ENCODE measurements at regions of chr16 and their contacts with region 1.

Region 1: DNA sequence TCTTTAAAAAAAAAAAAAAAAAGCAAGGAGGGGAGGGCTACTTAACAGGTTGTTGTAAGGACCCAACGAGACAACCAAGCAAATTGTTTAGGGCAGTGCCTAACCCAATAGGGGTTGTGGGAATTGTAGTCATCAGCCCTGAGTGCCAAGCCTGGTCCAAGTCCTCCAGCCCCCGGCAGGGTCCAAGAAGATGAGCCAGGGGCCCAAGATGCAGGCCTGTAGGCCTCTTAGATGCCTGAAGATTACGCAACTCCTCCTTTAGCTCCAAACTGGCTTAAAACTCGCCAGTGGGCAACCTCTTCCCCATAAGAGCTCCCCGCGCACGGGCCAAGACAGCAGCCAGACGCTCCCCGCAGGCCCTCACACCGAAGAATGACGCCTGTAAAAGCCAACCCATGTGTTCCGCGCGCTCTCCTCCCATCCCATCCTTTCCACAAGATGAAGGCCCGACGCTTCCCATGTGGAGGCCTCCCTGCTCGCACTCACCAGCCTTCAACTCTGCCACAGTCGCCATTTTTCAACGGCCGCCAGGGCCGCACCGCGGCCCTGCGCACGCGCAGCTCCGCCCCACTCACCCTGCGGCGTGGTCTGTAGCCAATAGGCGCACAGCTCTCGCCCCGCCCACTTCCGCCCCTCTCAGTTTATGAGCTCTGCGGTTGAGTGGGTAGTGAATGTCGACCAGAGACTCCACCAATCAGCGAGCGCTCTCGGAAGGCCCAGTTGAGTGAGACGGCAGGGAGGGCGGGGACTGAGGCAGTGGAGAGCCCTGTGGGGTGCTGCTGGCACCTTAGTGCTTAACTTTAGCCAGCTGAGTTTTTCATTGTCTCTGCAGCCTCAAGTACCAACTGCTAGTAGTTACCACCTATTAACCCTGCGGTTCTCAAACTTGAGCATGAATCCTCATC is at the start of gene CEP20:
- DNase-seq: peak; percentile 98
- H3K4me3 ChIP-seq: peak within 1 kb of the TSS; percentile 72 to 99 (median 97)
- H3K27ac ChIP-seq: peak within 1 kb of the TSS; percentile 85
- H3K4me1 ChIP-seq: peaks cover 15% of the 10 kb centered on the region
- H3K27me3 ChIP-seq: no peaks in the 10 kb centered on the region
- CTCF ChIP-seq: peak in 1 of 2 donors; percentile 22
- total RNA-seq, gene CEP20: 40.1 to 45.8 TPM

Region 2: DNA sequence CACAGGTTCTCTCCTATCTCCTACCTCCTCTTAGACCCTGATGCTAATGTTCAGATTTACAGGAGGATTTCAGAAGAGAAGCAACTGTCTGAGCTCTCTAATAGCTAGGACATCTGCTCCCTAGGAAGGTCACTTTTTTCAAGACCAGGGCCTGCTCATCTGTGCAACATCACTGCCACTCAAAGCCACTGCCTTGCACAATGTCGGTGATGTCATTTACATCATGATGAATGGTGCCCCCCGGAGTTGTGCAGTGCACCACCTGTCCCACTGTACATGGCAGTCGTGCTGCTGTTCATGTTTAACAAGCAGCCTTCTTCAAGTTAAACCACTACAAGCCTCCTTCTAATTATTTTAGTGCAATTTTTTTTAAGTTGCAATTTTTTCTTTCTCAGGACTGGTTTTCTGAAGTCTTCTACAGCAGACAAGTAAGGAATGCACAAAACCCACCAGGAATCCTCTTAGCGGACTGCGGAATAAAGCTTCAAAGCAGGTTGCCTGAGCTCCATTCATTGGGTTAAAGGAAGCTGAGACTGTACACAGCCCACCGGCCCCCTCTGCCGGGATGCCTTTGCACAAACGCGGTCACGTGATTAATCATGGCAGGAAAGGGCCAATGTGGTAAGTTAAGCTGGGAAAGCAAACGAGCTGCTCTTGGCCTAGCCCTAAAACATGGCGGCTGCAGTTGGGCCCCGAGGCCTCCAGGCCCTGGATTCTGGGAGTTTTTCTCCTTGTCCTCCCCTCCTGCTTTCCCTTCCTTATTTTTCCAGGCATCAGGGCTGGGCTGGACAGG is 105.6 kb before region 1 on chr16:
- CTCF ChIA-PET with region 1: no interaction called
- dilution Hi-C with region 1: no loop called
- in situ Hi-C with region 1: no loop called
- intact Hi-C with region 1: no loop called
- DNase-seq: no peak
- H3K4me3 ChIP-seq: no peak overlapping the region
- H3K27ac ChIP-seq: no peak overlapping the region
- H3K4me1 ChIP-seq: no peaks in the 10 kb centered on the region
- H3K27me3 ChIP-seq: no peaks in the 10 kb centered on the region
- CTCF ChIP-seq: no peak

Region 3: GRCh38 chr16:15899538-15900100 is 11.3 kb after region 1 on chr16:
- CTCF ChIA-PET with region 1: interaction called, 14 read pairs
- dilution Hi-C with region 1: no loop called
- in situ Hi-C with region 1: no loop called
- intact Hi-C with region 1: loop called (anchors 1 kb)
- DNase-seq: peak; percentile 98
- H3K4me3 ChIP-seq: no peak overlapping the region
- H3K27ac ChIP-seq: peak overlapping the region; percentile 98
- H3K4me1 ChIP-seq: peaks cover 30% of the 10 kb centered on the region
- H3K27me3 ChIP-seq: no peaks in the 10 kb centered on the region
- CTCF ChIP-seq: no peak

Region 4: GRCh38 chr16:15925631-15926030 is 37.3 kb after region 1 on chr16:
- CTCF ChIA-PET with region 1: no interaction called
- dilution Hi-C with region 1: no loop called
- in situ Hi-C with region 1: no loop called
- intact Hi-C with region 1: loop called (anchors 1 kb)
- DNase-seq: no peak
- H3K4me3 ChIP-seq: no peak overlapping the region
- H3K27ac ChIP-seq: no peak overlapping the region
- H3K4me1 ChIP-seq: no peaks in the 10 kb centered on the region
- H3K27me3 ChIP-seq: no peaks in the 10 kb centered on the region
- CTCF ChIP-seq: no peak

Region 5: GRCh38 chr16:15949210-15950160 is 61.2 kb after region 1 on chr16 and contains the start of gene ABCC1:
- CTCF ChIA-PET with region 1: interaction called, 5 read pairs
- dilution Hi-C with region 1: no loop called
- in situ Hi-C with region 1: no loop called
- intact Hi-C with region 1: loop called (anchors 2 kb)
- DNase-seq: peak; percentile 38
- H3K4me3 ChIP-seq: peak within 1 kb of the TSS; percentile 71 to 90 (median 79)
- H3K27ac ChIP-seq: peak within 1 kb of the TSS; percentile 87
- H3K4me1 ChIP-seq: peaks cover 27% of the 10 kb centered on the region
- H3K27me3 ChIP-seq: no peaks in the 10 kb centered on the region
- CTCF ChIP-seq: no peak
- total RNA-seq, gene ABCC1: 45.5 to 47.2 TPM

Region 6: GRCh38 chr16:15970743-15971434 is 82.6 kb after region 1 on chr16:
- CTCF ChIA-PET with region 1: interaction called, 11 read pairs
- dilution Hi-C with region 1: no loop called
- in situ Hi-C with region 1: no loop called
- intact Hi-C with region 1: no loop called
- DNase-seq: no peak
- H3K4me3 ChIP-seq: no peak overlapping the region
- H3K27ac ChIP-seq: no peak overlapping the region
- H3K4me1 ChIP-seq: peaks cover 22% of the 10 kb centered on the region
- H3K27me3 ChIP-seq: no peaks in the 10 kb centered on the region
- CTCF ChIP-seq: no peak

Measured in mammary epithelial cell (primary cell).